PC-9 (cell line): ENCODE measurements at regions of chr5 and their contacts with region 1.

Region 1: GRCh38 chr5:172932313-172933017 is 26.8 kb upstream of the RPL26L1 start:
- DNase-seq: peak in 1 of 2 experiments; percentile 70
- H3K4me3 ChIP-seq: no peak overlapping the region
- H3K27ac ChIP-seq: no peak overlapping the region
- H3K4me1 ChIP-seq: peaks cover 22% of the 10 kb centered on the region
- H3K27me3 ChIP-seq: no peaks in the 10 kb centered on the region
- CTCF ChIP-seq: peak; percentile 85

Region 2: DNA sequence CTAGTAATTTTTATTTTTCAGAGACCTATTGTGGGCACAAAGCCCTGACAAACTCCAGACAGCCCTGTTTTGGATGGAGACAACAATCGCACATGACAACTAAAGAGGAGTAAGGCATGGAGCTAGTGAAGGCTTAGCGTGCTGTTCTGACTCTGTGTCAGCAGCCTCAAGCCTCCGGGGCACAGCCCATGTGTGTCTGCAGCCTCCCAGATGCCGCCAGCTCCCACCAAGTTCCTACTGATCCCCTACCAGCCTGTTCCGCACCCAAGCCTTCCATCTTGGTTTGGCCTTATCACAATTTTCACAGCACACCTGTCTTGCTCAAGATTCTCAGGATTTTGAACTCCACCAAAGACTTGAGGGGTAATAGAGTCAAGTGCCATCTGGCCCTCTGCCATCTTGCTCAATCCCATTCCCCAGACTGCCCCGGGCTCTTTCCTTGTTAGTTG is 407.9 kb before region 1 on chr5:
- CTCF ChIA-PET with region 1: interaction called, 11 read pairs
- POLR2A ChIA-PET with region 1: no interaction called
- intact Hi-C with region 1: no loop called
- DNase-seq: no peak
- H3K4me3 ChIP-seq: no peak overlapping the region
- H3K27ac ChIP-seq: no peak overlapping the region
- H3K4me1 ChIP-seq: no peaks in the 10 kb centered on the region
- H3K27me3 ChIP-seq: peaks cover 45% of the 10 kb centered on the region
- CTCF ChIP-seq: no peak

Region 3: DNA sequence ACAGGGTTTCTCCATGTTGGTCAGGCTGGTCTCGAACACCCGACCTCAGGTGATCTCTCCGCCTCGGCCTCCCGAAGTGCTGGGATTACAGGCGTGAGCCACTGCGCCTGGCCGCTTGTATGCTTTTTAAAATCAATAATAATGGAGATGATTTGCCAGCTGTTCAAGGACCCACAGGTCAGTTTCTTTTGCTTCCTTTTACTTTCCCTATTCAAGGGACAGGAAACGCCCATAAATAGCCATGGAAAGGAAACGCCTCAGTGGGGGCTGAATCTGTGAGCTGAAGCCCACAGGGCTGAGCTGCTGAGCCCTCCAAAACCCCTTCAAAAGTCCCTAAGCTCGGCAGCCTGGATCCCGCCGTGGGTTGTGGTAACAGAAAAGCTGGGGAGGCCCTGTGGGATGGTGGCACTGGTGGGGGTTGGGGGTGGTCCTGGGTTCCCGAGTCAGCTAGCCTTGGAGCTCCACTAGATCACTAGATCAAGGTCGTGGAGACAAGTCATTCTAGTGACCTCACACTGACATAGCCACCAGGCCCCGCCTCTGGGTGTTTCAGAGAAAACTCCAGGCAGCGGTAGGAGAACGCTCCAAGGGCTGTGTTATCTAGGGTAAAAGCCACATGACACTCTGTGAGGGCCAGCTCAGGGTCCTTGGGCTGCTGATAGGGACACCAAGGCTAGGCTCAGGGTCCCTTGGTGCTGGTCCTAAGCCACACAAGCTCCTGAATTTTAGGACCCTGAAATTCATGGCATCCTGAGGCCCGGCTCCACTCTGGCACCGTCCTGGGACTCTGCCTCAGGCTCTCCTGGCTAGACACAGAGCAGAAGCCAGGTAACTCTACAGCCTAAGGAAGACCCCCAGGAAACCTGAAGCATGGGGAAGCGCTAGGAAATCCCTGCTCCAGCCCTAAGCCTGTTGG is 143.4 kb before region 1 on chr5:
- CTCF ChIA-PET with region 1: no interaction called
- POLR2A ChIA-PET with region 1: interaction called, 11 read pairs
- intact Hi-C with region 1: no loop called
- DNase-seq: no peak
- H3K4me3 ChIP-seq: no peak overlapping the region
- H3K27ac ChIP-seq: peak overlapping the region; percentile 13; the same call in 1 of the 2 replicates
- H3K4me1 ChIP-seq: peaks cover 25% of the 10 kb centered on the region
- H3K27me3 ChIP-seq: no peaks in the 10 kb centered on the region
- CTCF ChIP-seq: no peak

Region 4: GRCh38 chr5:172910828-172911627 is 21.4 kb before region 1 on chr5:
- CTCF ChIA-PET with region 1: no interaction called
- POLR2A ChIA-PET with region 1: no interaction called
- intact Hi-C with region 1: no loop called
- DNase-seq: peak; percentile 37 to 47
- H3K4me3 ChIP-seq: no peak overlapping the region
- H3K27ac ChIP-seq: no peak overlapping the region
- H3K4me1 ChIP-seq: peaks cover 7% of the 10 kb centered on the region
- H3K27me3 ChIP-seq: no peaks in the 10 kb centered on the region
- CTCF ChIP-seq: peak; percentile 57